Activated B cell treated with CpG ODN at 0.5 μM for 24 hours (primary cell): ENCODE measurements at regions of chr7 and their contacts with region 1.

Region 1: GRCh38 chr7:77736991-77737390 is 40.7 kb downstream of the RSBN1L start:
- DNase-seq: no peak
- ATAC-seq: no peak
- H3K4me3 Mint-ChIP-seq: no peak overlapping the region
- H3K27ac Mint-ChIP-seq: no peak overlapping the region
- H3K4me1 Mint-ChIP-seq: peaks cover 11% of the 10 kb centered on the region
- H3K27me3 Mint-ChIP-seq: no peaks in the 10 kb centered on the region
- CTCF ChIP-seq: no peak

Region 2: DNA sequence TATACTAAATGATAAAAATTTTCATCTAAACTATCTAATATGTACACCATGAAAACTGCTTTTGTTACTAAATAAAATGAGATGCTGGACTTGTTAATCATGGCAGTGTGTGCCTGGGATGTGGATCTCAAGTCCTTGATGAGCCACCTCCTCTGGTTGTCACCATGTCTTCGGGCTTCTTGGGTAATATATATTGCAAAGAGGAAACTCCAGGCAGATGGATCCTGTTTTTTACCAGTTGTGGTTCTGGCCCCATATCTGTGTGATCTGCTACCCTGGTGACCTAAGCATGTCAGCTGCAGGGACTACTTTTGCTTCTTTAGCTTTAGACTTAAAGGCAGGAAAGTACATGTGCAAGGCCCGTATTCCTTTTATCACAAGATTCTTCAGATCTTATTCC is 15.0 kb after region 1 on chr7:
- CTCF ChIA-PET with region 1: no interaction called
- POLR2A ChIA-PET with region 1: no interaction called
- intact Hi-C with region 1: loop called (anchors 2 kb)
- DNase-seq: no peak
- ATAC-seq: no peak
- H3K4me3 Mint-ChIP-seq: no peak overlapping the region
- H3K27ac Mint-ChIP-seq: no peak overlapping the region
- H3K4me1 Mint-ChIP-seq: peaks cover 10% of the 10 kb centered on the region
- H3K27me3 Mint-ChIP-seq: no peaks in the 10 kb centered on the region
- CTCF ChIP-seq: no peak

Region 3: GRCh38 chr7:77855371-77856083 is 118.5 kb after region 1 on chr7:
- CTCF ChIA-PET with region 1: no interaction called
- POLR2A ChIA-PET with region 1: no interaction called
- intact Hi-C with region 1: no loop called
- DNase-seq: no peak
- ATAC-seq: no peak
- H3K4me3 Mint-ChIP-seq: no peak overlapping the region
- H3K27ac Mint-ChIP-seq: no peak overlapping the region
- H3K4me1 Mint-ChIP-seq: peaks cover 72% of the 10 kb centered on the region
- H3K27me3 Mint-ChIP-seq: no peaks in the 10 kb centered on the region
- CTCF ChIP-seq: no peak

Region 4: DNA sequence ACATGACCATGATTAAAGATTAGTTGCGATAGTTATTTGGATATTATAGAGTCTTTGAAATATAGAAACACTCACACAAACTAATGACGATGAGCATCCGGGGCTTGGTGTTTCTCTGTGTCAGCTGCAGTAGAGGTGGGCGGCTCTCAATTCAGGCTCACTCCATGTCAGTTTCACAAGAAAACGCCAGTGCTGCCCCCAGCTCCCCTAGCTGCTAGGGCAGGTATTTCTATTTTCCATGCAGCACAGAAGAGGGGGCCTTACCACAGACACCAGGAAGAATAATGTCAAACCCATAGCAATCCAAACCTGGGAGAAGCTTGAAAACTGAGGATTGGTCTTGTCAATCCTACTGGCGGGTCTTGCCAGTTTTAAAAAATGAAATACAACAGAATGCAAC is 258.7 kb after region 1 on chr7:
- CTCF ChIA-PET with region 1: no interaction called
- POLR2A ChIA-PET with region 1: no interaction called
- intact Hi-C with region 1: no loop called
- DNase-seq: no peak
- ATAC-seq: no peak
- H3K4me3 Mint-ChIP-seq: no peak overlapping the region
- H3K27ac Mint-ChIP-seq: no peak overlapping the region
- H3K4me1 Mint-ChIP-seq: no peaks in the 10 kb centered on the region
- H3K27me3 Mint-ChIP-seq: no peaks in the 10 kb centered on the region
- CTCF ChIP-seq: no peak